A673 (cell line): ENCODE measurements at regions of chr2 and their contacts with region 1.

Region 1: DNA sequence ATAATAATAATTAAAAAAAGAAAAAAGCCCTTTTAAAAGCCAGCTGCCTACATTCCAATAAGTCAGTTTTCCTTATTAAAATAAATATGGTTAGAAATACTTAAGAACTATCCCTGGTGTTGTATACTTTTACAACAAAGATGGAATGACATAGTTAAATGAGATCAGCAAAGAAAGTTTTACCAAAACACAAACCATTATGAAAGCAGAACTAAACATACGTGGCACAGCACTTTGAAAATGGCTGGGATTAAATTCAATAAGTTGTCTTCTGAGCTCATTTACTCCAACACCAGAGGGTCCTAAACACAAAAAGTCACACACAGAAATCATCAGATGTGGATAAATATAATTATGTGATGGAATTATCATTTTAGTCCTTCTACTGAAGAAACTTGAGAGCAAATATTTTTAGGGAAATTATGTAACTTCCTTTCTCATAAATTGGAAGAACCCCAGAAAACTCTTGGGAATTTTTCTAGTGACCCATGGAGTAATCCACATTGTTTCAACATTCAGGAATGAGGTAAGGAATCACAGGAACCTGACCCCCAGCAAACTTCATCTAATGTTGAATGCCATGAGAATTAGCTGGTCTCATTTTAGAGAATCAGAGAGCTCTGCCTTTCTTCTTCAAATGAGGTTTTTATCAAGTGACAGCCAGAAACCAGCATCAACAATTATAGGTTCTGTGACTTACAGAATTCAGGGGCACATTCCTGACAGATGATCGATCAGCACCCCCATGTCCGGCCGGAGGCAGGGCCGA is 11.5 kb upstream of the TMEM237 start:
- DNase-seq: no peak
- H3K4me3 ChIP-seq: no peak overlapping the region
- H3K27ac ChIP-seq: no peak overlapping the region
- H3K4me1 ChIP-seq: peaks cover 6% of the 10 kb centered on the region
- H3K27me3 ChIP-seq: no peaks in the 10 kb centered on the region
- CTCF ChIP-seq: no peak

Region 2: DNA sequence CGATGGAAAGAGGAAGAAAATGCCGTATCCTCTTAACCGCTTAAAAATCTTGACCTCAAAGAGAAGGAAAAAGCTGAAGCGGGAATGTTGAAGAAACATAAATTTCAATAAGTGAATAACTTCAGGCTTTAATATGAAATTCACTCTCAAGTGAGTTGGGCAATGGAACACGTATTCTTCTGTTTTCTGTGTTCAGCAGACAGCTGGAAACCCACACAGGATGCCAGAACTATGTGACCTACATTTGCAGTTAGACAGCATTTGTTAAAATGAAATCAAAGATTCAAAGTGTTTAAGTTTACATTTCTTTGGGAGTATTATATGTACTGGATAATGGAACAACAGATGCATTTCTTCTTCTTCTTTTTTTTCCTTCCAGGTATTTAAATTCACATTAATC is 1428.8 kb before region 1 on chr2:
- CTCF ChIA-PET with region 1: no interaction called
- POLR2A ChIA-PET with region 1: no interaction called
- intact Hi-C with region 1: no loop called
- DNase-seq: no peak
- H3K4me3 ChIP-seq: no peak overlapping the region
- H3K27ac ChIP-seq: no peak overlapping the region
- H3K4me1 ChIP-seq: no peaks in the 10 kb centered on the region
- H3K27me3 ChIP-seq: peaks cover 13% of the 10 kb centered on the region
- CTCF ChIP-seq: no peak

Region 3: GRCh38 chr2:202221873-202222272 is 567.1 kb after region 1 on chr2:
- CTCF ChIA-PET with region 1: no interaction called
- POLR2A ChIA-PET with region 1: interaction called, 10 read pairs
- intact Hi-C with region 1: no loop called
- DNase-seq: no peak
- H3K4me3 ChIP-seq: no peak overlapping the region
- H3K27ac ChIP-seq: no peak overlapping the region
- H3K4me1 ChIP-seq: no peaks in the 10 kb centered on the region
- H3K27me3 ChIP-seq: no peaks in the 10 kb centered on the region
- CTCF ChIP-seq: no peak